Heart left ventricle (tissue), 16 donors: ENCODE measurements at regions of chr11 and their contacts with region 1.

Region 1: DNA sequence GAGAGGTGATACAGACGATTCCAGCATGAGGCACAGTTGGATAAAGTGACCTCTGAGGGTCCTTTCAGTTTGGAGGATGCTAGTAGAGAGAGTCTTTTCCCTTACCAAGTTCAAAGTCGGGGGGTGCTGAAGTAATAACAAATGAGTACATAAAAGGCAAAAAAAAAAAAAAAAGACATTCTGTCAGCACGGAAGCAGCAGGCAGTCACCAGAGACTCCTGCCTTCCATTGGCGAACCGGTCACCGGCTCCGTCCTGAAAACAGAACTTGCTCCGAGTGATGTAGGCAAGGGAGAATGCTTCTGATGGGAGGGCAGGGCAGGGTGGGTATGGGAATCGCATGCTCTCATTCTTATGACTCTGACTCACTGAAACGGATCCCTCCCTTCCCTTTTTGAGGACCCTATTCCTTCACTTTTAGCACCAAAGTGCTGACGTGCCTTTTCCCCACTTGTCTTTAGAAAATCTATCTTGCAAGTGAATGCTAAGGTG is 65.9 kb downstream of the PRR5L start:
- DNase-seq: peak in 2 of 5 donors; percentile 28 to 38
- ATAC-seq: peak in 3 of 4 donors; percentile 69 to 83 (median 72)
- H3K4me3 ChIP-seq: peak overlapping the region in 6 of 12 donors; percentile 2 to 33 (median 20)
- H3K27ac ChIP-seq: peak overlapping the region in 2 of 12 donors; percentile 20 to 38
- H3K4me1 ChIP-seq: peaks cover 0 to 61% (median 0%) of the 10 kb centered on the region in 12 donors
- H3K27me3 ChIP-seq: peaks cover 0 to 6% (median 0%) of the 10 kb centered on the region in 9 donors
- CTCF ChIP-seq: no peak
- POLR2A ChIP-seq: no peak

Region 2: DNA sequence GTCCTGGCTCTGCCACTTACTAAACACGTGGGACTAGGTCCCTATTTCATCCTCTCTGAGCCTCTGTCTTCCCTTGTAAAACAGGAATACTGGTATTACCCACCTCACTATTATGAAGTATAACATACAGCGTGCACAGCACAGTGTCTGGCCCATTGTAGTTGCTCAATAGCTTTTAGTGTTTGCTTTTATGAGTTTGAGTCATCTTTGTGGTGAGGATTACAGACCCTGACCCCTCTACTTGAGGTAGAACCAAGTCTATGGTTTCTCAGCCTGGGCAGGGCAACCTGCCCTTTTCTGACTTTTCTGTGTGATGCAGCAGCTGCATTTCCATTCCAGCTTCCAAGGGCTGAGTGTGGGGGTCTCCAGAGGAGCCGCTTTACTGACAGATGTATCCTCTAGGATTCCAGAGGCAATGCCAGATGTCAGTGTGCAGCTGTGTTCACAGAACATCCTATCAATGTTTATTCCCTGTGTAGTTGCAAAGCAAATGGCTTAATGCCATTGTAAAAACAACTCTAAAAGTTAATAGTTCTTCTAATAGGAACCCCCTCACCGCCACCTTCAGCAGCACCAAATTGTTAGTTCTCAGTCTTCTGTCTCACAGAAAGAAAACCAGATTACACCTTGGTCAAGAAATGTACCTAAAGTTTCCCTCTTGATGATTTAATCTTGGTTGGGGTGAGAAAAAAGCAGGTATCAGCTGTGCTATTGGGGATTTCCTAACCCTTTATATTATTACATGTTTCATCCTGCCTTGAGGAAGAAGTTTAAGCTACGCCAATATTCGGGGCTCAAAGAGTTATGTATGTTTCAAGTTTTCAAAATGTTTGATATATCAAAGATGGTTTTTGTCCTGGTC is 49.1 kb before region 1 on chr11:
- intact Hi-C with region 1: loop called in 1 of 10 experiments (anchors 10 kb)
- DNase-seq: peak in 1 of 5 donors; percentile 10
- ATAC-seq: peak in 1 of 4 donors; percentile 55
- H3K4me3 ChIP-seq: no peak overlapping the region
- H3K27ac ChIP-seq: no peak overlapping the region
- H3K4me1 ChIP-seq: peaks cover 0 to 18% (median 0%) of the 10 kb centered on the region in 12 donors
- H3K27me3 ChIP-seq: no peaks in the 10 kb centered on the region
- CTCF ChIP-seq: no peak
- POLR2A ChIP-seq: no peak

Region 3: GRCh38 chr11:36326524-36327419 is 35.2 kb before region 1 on chr11:
- intact Hi-C with region 1: no loop called
- DNase-seq: no peak
- ATAC-seq: no peak
- H3K4me3 ChIP-seq: no peak overlapping the region
- H3K27ac ChIP-seq: no peak overlapping the region
- H3K4me1 ChIP-seq: no peaks in the 10 kb centered on the region
- H3K27me3 ChIP-seq: no peaks in the 10 kb centered on the region
- CTCF ChIP-seq: no peak
- POLR2A ChIP-seq: no peak